B cell (primary cell): ENCODE measurements at regions of chr10 and their contacts with region 1.

Region 1: GRCh38 chr10:88565072-88565471 is 18.0 kb downstream of the RNLS start:
- DNase-seq: peak; percentile 36
- ATAC-seq: no peak
- H3K4me3 ChIP-seq: no peak overlapping the region
- H3K4me3 Mint-ChIP-seq: no peak overlapping the region
- H3K27ac ChIP-seq: no peak overlapping the region
- H3K27ac Mint-ChIP-seq: no peak overlapping the region
- H3K4me1 ChIP-seq: no peaks in the 10 kb centered on the region
- H3K4me1 Mint-ChIP-seq: no peaks in the 10 kb centered on the region
- H3K27me3 ChIP-seq: no peaks in the 10 kb centered on the region
- H3K27me3 Mint-ChIP-seq: no peaks in the 10 kb centered on the region
- CTCF ChIP-seq: peak; percentile 55

Region 2: GRCh38 chr10:87837445-87837844 is 727.6 kb before region 1 on chr10:
- CTCF ChIA-PET with region 1: no interaction called
- POLR2A ChIA-PET with region 1: interaction called, 11 read pairs
- intact Hi-C with region 1: no loop called
- DNase-seq: peak; percentile 39
- ATAC-seq: peak; percentile 43
- H3K4me3 ChIP-seq: no peak overlapping the region
- H3K4me3 Mint-ChIP-seq: no peak overlapping the region
- H3K27ac ChIP-seq: no peak overlapping the region
- H3K27ac Mint-ChIP-seq: no peak overlapping the region
- H3K4me1 ChIP-seq: peaks cover 8% of the 10 kb centered on the region in 2 donors
- H3K4me1 Mint-ChIP-seq: peaks cover 6% of the 10 kb centered on the region
- H3K27me3 ChIP-seq: no peaks in the 10 kb centered on the region
- H3K27me3 Mint-ChIP-seq: no peaks in the 10 kb centered on the region
- CTCF ChIP-seq: no peak

Region 3: DNA sequence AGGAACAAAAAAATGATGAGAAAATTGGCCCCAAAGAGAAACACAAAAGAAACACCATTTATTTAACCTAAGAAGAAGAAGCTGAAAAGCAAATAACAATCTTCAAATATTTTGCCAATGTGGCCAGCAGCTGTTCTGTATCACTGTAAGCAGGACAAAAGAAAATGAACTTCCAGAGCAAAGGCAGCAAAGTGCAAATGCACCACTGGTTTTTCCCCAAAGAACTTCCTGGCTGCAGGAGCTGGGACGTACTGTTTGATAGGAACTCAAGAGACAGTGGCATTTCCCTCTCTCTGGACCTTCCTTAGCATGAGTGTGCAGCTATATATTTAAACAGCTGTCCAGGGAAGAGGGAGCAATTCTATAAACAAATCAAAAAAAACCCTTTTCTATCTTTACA is 42.4 kb before region 1 on chr10:
- CTCF ChIA-PET with region 1: no interaction called
- POLR2A ChIA-PET with region 1: no interaction called
- intact Hi-C with region 1: no loop called
- DNase-seq: no peak
- ATAC-seq: no peak
- H3K4me3 ChIP-seq: no peak overlapping the region
- H3K4me3 Mint-ChIP-seq: no peak overlapping the region
- H3K27ac ChIP-seq: no peak overlapping the region
- H3K27ac Mint-ChIP-seq: no peak overlapping the region
- H3K4me1 ChIP-seq: no peaks in the 10 kb centered on the region
- H3K4me1 Mint-ChIP-seq: no peaks in the 10 kb centered on the region
- H3K27me3 ChIP-seq: no peaks in the 10 kb centered on the region
- H3K27me3 Mint-ChIP-seq: no peaks in the 10 kb centered on the region
- CTCF ChIP-seq: no peak